Sciatic nerve (tissue), 2 donors: ENCODE measurements at regions of chr14 and their contacts with region 1.

Region 1: GRCh38 chr14:59215325-59216181 is 27.1 kb downstream of the DAAM1 start:
- DNase-seq: peak; percentile 83
- ATAC-seq: peak; percentile 96

Region 2: DNA sequence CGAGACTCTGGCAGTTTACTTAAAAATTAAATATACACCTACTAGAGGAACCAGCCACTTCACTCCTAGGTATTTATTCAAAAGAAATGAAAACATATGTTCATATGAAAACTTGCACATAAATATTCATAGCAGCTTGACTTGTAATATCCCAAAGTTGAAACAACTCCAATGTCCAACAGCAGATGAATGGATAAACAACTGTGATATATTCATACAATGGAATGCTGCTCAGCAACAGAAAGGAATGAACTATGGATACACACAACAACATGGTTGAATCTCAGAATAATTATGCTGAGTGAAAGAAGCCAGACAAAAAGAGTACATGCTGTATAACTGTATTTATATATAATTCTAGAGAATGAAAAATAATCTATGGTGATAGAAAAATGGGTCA is 631.2 kb before region 1 on chr14:
- intact Hi-C with region 1: no loop called
- DNase-seq: no peak
- ATAC-seq: no peak

Region 3: GRCh38 chr14:59150990-59151389 is 64.6 kb before region 1 on chr14:
- intact Hi-C with region 1: no loop called
- DNase-seq: no peak
- ATAC-seq: peak; percentile 51

Region 4: DNA sequence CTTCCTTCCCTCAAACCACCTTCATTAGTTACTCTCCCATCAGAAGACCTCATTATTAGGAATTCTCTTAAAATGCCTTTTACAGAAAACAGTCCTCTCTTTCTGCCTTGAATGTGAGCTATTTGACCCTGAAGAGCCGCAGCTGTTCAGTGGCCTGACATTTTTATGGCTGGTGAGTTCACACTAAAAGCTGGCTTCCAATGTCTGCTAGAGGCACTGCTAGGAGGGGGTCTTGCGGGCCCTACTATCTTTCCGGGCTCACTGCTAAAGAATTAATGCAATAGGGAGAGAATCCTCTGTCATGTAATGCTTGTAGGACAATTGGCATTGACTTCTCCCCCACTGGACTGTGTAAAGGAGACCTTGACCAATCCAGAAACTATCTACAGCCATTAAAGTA is 161.9 kb after region 1 on chr14:
- intact Hi-C with region 1: no loop called
- DNase-seq: no peak
- ATAC-seq: peak; percentile 23

Region 5: GRCh38 chr14:60648934-60649874 is 1433.7 kb after region 1 on chr14 and contains the start of gene SIX1:
- intact Hi-C with region 1: loop called (anchors 10 kb)
- DNase-seq: peak; percentile 86
- ATAC-seq: peak; percentile 94
- total RNA-seq, gene SIX1: 5.2 TPM